ENCODE measurements at regions of chr1 and their contacts with region 1.

Region 1: DNA sequence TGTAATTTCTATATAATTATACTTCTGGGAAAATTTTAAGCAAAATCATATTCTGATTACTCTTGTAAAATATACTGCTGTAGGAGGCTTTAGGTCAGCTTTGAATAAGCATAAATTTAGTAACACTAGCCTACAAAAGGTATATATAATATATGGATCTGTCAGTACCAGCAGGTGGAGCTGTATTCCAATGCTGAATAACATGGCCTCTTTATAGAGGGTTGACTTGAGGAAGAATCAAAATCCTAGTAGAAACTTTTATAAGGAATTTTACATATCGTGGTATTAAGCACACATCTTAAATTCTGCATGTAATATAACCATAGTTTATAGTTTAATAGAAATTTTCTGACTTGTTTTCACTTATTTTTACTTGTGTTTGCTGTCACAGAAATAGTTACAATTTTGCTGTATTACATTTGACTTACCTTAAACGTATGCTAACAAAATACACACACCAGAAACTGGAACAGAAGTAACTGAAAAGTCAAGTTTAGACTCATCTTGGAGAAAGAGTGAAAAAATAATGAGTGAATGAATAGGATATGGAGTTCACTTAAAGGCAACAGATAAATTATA is 79.3 kb downstream of the HMCN1 start:
- DNase-seq: peak in 1 of 2 donors; percentile 22
- H3K4me3 ChIP-seq: no peak overlapping the region
- CTCF ChIP-seq: no peak
- POLR2A ChIP-seq: no peak

Region 2: GRCh38 chr1:185734929-185735700 is 78.4 kb before region 1 on chr1:
- intact Hi-C with region 1: no loop called
- DNase-seq: no peak
- H3K4me3 ChIP-seq: peak overlapping the region; percentile 32
- CTCF ChIP-seq: no peak
- POLR2A ChIP-seq: no peak

Region 3: DNA sequence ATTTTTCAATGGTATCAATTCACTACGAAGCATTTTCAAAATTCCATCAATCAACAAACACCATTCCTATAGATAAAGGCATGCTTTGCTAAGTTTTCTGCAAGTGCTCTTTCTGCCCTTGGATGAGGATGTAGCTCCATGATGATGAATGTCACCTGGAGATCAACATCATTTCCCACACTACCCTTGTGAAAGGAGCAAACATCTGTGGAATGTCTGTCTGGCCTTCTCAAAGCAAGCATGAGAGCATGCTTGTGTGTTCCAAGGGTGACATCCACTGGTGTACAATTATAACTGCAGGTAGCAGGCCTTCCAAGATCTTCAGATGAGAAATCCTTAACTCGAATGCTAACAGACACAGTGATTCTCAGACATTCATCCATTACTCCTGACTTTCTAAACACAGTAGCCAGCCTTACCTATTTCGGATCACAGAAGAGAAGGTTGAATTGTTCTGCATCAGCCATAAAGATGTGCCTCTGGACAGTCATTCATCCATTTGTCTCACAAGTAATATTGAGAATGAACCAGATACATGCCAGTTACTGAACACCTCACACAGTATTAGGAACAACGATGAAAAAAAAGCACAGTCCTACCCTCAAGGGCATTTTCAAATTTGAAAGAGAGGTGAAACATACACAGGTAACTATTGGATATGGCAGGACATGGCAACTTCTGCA is 399.2 kb after region 1 on chr1:
- intact Hi-C with region 1: loop called (anchors 5 kb)
- DNase-seq: peak in 1 of 2 donors; percentile 37
- H3K4me3 ChIP-seq: no peak overlapping the region
- CTCF ChIP-seq: peak in 2 of 3 donors; percentile 1 to 49
- POLR2A ChIP-seq: no peak